PC-3 (cell line): ENCODE measurements at regions of chr2 and their contacts with region 1.

Region 1: GRCh38 chr2:25714740-25715139 is 41.4 kb upstream of the DTNB start:
- DNase-seq: peak; percentile 51
- ATAC-seq: peak; percentile 93
- H3K4me3 ChIP-seq: no peak overlapping the region
- H3K27ac ChIP-seq: no peak overlapping the region
- H3K4me1 ChIP-seq: peaks cover under 1% of the 10 kb centered on the region; the same call in 1 of the 2 replicates
- H3K27me3 ChIP-seq: no peaks in the 10 kb centered on the region
- CTCF ChIP-seq: peak; percentile 52; the same call in 1 of the 2 replicates

Region 2: DNA sequence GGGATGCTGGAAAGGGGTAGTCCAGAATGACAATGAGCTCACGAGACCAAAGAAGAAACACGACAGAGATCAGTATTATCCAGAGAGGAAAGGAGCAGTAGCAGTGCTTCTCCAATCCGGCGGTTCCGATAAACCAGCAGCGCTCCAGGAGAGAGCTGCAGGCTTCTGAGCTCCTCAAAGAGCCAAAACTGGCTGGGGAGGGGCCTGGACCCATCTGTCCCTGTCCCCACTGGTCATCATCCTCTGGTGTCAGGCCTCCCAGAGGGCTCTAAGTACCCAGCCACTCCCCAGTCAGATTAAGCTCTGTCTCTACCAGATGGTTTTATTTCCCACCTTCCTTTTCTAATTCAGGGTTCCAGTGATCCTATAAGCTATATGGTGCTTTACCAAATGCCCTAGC is 766.2 kb before region 1 on chr2:
- CTCF ChIA-PET with region 1: no interaction called
- POLR2A ChIA-PET with region 1: no interaction called
- intact Hi-C with region 1: no loop called
- DNase-seq: no peak
- ATAC-seq: no peak
- H3K4me3 ChIP-seq: no peak overlapping the region
- H3K27ac ChIP-seq: no peak overlapping the region
- H3K4me1 ChIP-seq: peaks cover 7% of the 10 kb centered on the region; the same call in 1 of the 2 replicates
- H3K27me3 ChIP-seq: no peaks in the 10 kb centered on the region
- CTCF ChIP-seq: no peak

Region 3: DNA sequence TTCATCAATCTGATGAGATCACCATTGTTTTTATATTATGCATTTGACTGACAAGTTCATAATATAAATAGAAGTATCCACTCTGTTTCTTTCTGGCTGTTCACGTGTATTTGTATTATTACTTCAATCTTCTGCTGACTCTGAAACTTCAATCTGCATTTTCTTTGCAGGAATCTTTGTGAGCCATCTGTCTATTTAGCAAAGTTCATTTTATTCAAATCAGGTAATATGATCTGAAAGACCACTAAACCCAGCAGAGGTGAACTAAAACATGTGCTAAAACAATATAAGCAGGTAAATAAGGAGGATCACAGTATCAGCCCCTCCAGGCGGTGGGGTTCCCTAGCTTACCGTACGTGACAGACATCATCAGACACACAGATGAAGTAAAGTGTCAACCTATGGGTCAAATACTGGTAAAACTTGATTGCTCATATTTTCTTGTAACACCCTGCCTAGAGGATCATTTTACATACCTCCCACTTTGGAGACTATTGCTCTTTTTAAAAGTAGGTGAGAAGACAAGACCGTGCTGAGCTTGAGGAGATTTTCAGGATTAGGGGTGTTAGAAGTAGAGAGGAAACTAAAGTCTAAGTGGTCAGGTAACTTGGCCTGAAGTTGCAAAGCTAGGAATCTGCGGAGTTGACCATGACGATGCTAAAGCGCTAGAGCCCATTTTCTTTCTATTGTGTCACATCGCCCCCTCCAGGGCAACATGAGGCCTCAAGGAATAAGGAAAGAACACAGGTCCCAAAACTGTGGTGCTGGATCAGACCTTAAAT is 50.4 kb before region 1 on chr2:
- CTCF ChIA-PET with region 1: interaction called, 4 read pairs
- POLR2A ChIA-PET with region 1: no interaction called
- intact Hi-C with region 1: loop called (anchors 2 kb)
- DNase-seq: peak; percentile 80
- ATAC-seq: peak; percentile 98
- H3K4me3 ChIP-seq: peak overlapping the region; percentile 56
- H3K27ac ChIP-seq: peak overlapping the region; percentile 12; the same call in 1 of the 2 replicates
- H3K4me1 ChIP-seq: peaks cover 11% of the 10 kb centered on the region
- H3K27me3 ChIP-seq: no peaks in the 10 kb centered on the region
- CTCF ChIP-seq: peak; percentile 95